ENCODE measurements at regions of chr4 and their contacts with region 1.

Region 1: DNA sequence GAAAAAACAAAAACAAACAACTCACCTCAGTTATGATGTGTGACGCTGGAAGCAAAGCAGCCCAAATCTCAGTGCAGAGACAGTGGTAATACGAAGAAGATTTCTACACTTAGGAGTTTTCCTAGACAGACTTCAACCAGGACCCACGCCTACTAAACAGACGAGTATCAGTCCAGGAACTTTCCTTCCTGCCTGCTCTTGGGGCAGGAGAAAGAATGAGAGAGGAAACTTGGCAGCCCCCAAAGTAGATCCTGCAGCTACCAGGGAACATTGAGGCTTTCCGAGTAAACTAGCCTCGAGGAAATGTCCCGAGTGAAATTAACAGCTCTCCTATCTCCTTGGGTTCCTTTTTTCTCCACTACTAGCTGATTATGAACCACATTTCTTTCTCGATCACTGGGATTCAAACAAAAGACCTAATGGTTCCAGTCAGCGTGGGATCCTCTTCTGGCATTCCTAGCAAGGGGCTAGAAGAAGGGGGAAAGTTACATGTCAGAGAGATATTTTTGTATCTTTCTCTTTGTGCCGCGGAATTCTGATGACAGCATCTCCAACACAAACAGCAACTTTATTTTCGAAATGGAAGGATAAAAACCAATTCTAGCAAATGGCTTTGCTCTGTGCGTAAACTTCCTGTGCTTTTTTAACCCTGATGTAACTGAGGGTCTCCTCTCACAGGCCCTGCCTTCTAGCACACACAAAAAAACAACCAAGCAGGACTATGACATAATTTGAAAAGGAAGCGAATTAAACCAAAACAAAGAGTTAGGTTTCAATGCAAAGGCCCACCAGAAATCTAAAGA is 53.2 kb downstream of the PPM1K start:
- DNase-seq: peak; percentile 20
- ATAC-seq: peak; percentile 86
- H3K4me3 ChIP-seq: peak overlapping the region; percentile 43
- H3K27ac ChIP-seq: peak overlapping the region; percentile 30; the same call in 1 of the 2 replicates
- H3K4me1 ChIP-seq: peaks cover 3% of the 10 kb centered on the region
- H3K27me3 ChIP-seq: no peaks in the 10 kb centered on the region; the same call in 1 of the 2 replicates
- CTCF ChIP-seq: no peak
- POLR2A ChIP-seq: no peak
- RAD21 ChIP-seq: no peak

Region 2: GRCh38 chr4:88366460-88366859 is 135.3 kb after region 1 on chr4:
- CTCF ChIA-PET with region 1: no interaction called
- POLR2A ChIA-PET with region 1: no interaction called
- dilution Hi-C with region 1: no loop called
- in situ Hi-C with region 1: no loop called
- intact Hi-C with region 1: loop called (anchors 10 kb)
- DNase-seq: no peak
- ATAC-seq: no peak
- H3K4me3 ChIP-seq: no peak overlapping the region
- H3K27ac ChIP-seq: no peak overlapping the region
- H3K4me1 ChIP-seq: no peaks in the 10 kb centered on the region
- H3K27me3 ChIP-seq: peaks cover 4% of the 10 kb centered on the region; the same call in 1 of the 2 replicates
- CTCF ChIP-seq: no peak
- POLR2A ChIP-seq: no peak
- RAD21 ChIP-seq: no peak

Measured in IMR-90 (cell line).